ENCODE measurements at regions of chr5 and their contacts with region 1.

Region 1: GRCh38 chr5:122774861-122775549 is at the start of gene SNX2:
- DNase-seq: peak; percentile 82 to 99 (median 90)

Region 2: GRCh38 chr5:122845229-122846050 is 70.4 kb after region 1 on chr5 and contains the start of gene SNX24:
- intact Hi-C with region 1: loop called (anchors 2 kb)
- DNase-seq: peak; percentile 60 to 96 (median 73)

Region 3: GRCh38 chr5:123047706-123048105 is 272.7 kb after region 1 on chr5:
- intact Hi-C with region 1: no loop called
- DNase-seq: no peak